Esophagus muscularis mucosa (tissue), 4 donors: ENCODE measurements at regions of chr3 and their contacts with region 1.

Region 1: GRCh38 chr3:64612082-64612860 is 75.5 kb downstream of the ADAMTS9 start:
- DNase-seq: no peak
- H3K4me3 ChIP-seq: peak overlapping the region in 3 of 4 donors; percentile 9 to 17 (median 14)
- H3K27ac ChIP-seq: peak overlapping the region; percentile 85 to 89 (median 88)
- H3K4me1 ChIP-seq: peaks cover 27 to 47% (median 36%) of the 10 kb centered on the region in 4 donors
- H3K27me3 ChIP-seq: no peaks in the 10 kb centered on the region
- CTCF ChIP-seq: no peak
- EP300 ChIP-seq: peak; percentile 72
- POLR2A ChIP-seq: no peak

Region 2: DNA sequence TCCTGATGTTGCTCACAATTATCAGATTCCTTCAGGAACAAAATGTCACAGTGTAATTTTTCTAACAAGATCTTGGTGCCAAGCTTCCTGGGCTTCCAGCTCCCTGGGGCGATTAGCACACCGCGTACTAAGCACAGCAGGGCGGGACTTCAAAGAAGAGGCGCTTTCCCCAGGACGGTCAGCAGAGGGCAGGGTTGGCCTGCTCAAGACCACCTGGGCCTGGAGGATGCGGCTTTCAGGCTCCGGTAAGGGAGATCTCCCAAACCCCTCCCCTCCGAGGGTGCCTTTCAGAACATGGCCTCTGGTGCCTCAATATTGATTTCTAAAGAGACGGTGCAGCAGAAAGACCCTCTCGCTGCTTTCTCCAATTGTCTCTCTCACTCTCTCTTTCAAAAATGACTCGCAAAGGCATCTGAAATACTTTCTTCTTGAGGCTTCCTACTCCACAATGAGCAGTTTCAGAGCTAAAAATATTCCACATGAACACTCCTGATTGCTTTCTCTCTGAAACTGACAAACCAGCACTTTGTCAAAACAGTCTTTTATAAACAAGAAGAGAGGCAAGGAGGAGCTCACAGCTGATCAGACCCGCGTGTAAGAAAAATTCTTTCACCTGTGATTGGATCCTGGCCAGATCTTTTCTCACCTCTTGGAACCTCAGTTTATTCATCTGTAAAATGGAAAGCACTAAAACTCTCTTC is 78.5 kb before region 1 on chr3:
- intact Hi-C with region 1: no loop called
- DNase-seq: peak; percentile 95
- H3K4me3 ChIP-seq: peak overlapping the region in 3 of 4 donors; percentile 9 to 29 (median 28)
- H3K27ac ChIP-seq: peak overlapping the region; percentile 58 to 83 (median 70)
- H3K4me1 ChIP-seq: peaks cover 13 to 53% (median 38%) of the 10 kb centered on the region in 4 donors
- H3K27me3 ChIP-seq: no peaks in the 10 kb centered on the region
- CTCF ChIP-seq: peak; percentile 89 to 94 (median 93)
- EP300 ChIP-seq: peak; percentile 47
- POLR2A ChIP-seq: no peak

Region 3: GRCh38 chr3:64554081-64554920 is 58.0 kb before region 1 on chr3:
- intact Hi-C with region 1: loop called (anchors 5 kb)
- DNase-seq: peak; percentile 3
- H3K4me3 ChIP-seq: no peak overlapping the region
- H3K27ac ChIP-seq: peak overlapping the region in 2 of 4 donors; percentile 8 to 87
- H3K4me1 ChIP-seq: peaks cover 0 to 53% (median 38%) of the 10 kb centered on the region in 4 donors
- H3K27me3 ChIP-seq: no peaks in the 10 kb centered on the region
- CTCF ChIP-seq: no peak
- EP300 ChIP-seq: no peak
- POLR2A ChIP-seq: no peak

Region 4: DNA sequence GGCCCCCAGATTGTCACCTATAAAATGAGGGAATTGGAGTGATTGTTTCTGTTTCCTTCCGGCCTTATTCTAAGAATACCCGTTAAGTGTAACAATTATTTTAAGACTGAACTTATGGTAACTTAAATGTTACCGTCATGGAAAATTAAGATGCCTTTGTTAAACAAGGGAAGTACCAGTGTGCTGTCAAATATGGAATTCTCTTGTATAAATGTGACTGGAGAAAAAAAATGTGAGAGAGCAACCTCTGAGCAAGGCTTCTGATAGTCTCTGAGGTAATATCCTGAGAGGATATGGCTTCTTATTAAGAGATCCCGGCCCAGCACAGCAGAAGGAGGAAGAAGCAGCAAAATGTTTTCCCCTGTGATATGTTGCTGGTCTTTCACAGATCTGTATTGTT is 556.3 kb after region 1 on chr3:
- intact Hi-C with region 1: no loop called
- DNase-seq: no peak
- H3K4me3 ChIP-seq: no peak overlapping the region
- H3K27ac ChIP-seq: peak overlapping the region; percentile 72 to 82 (median 74)
- H3K4me1 ChIP-seq: peaks cover 22 to 31% (median 25%) of the 10 kb centered on the region in 4 donors
- H3K27me3 ChIP-seq: no peaks in the 10 kb centered on the region
- CTCF ChIP-seq: no peak
- EP300 ChIP-seq: no peak
- POLR2A ChIP-seq: no peak

Region 5: GRCh38 chr3:65342084-65342683 is 729.9 kb after region 1 on chr3:
- intact Hi-C with region 1: no loop called
- DNase-seq: no peak
- H3K4me3 ChIP-seq: no peak overlapping the region
- H3K27ac ChIP-seq: no peak overlapping the region
- H3K4me1 ChIP-seq: no peaks in the 10 kb centered on the region
- H3K27me3 ChIP-seq: peaks cover 0 to 3% (median 0%) of the 10 kb centered on the region in 4 donors
- CTCF ChIP-seq: peak; percentile 9 to 46 (median 32)
- EP300 ChIP-seq: no peak
- POLR2A ChIP-seq: no peak